CD8-positive, alpha-beta T cell (primary cell): ENCODE measurements at regions of chr3 and their contacts with region 1.

Region 1: DNA sequence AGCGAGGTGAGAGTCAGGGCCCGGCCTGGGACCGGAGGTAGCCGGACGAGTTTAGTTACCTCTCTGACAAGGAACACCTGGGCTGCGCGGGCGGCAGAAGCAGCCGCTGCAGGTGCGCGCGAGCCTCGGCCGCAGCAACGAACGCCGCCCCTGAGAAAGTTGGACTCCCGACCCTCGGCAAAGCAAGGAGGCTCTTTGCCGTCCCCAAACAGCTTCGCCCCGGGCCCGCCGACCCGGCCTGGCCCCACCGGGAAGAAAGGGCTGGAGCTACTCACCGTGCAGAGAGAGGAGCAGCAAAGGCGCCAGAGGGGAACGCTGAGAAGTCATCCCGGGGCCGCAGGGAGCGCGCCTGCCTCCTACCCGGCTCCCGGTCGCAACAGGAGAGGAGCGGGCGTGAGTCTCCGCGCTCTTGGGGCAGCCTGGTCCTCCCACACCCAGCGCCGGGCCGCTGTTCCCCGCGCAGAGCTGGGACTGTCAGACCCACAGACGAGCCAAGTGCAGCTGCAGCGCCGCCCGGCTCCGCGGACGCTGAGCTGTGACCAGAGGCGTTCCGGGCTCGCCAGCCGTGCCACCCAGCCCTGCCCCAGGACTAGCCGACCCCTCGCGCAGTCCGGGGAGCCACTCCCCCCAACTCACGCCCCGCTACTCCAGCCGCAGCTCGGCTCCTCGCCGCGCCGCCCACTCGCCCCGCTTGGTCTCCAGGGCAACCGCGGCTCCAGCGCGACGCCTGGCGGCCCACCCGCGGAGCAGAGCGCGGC is at the start of gene IGSF11:
- DNase-seq: peak; percentile 33 to 81 (median 64)
- ATAC-seq: peak; percentile 89
- H3K4me3 ChIP-seq: peak within 1 kb of the TSS; percentile 58 to 64
- H3K4me3 Mint-ChIP-seq: peak within 1 kb of the TSS; percentile 90
- H3K27ac ChIP-seq: peak within 1 kb of the TSS in 1 of 2 experiments; percentile 22
- H3K27ac Mint-ChIP-seq: no peak within 1 kb of the TSS
- H3K4me1 ChIP-seq: peaks cover 6% of the 10 kb centered on the region
- H3K4me1 Mint-ChIP-seq: peaks cover 15% of the 10 kb centered on the region
- H3K27me3 ChIP-seq: peaks cover 0 to 14% of the 10 kb centered on the region in 2 experiments
- H3K27me3 Mint-ChIP-seq: peaks cover 29% of the 10 kb centered on the region
- CTCF ChIP-seq: peak; percentile 67
- total RNA-seq, gene IGSF11: 0.57 to 0.86 TPM

Region 2: GRCh38 chr3:118907909-118908308 is 126.5 kb before region 1 on chr3:
- CTCF ChIA-PET with region 1: interaction called, 12 read pairs
- POLR2A ChIA-PET with region 1: no interaction called
- intact Hi-C with region 1: no loop called
- DNase-seq: no peak
- ATAC-seq: no peak
- H3K4me3 ChIP-seq: no peak overlapping the region
- H3K4me3 Mint-ChIP-seq: no peak overlapping the region
- H3K27ac ChIP-seq: no peak overlapping the region
- H3K27ac Mint-ChIP-seq: no peak overlapping the region
- H3K4me1 ChIP-seq: no peaks in the 10 kb centered on the region
- H3K4me1 Mint-ChIP-seq: no peaks in the 10 kb centered on the region
- H3K27me3 ChIP-seq: no peaks in the 10 kb centered on the region
- H3K27me3 Mint-ChIP-seq: no peaks in the 10 kb centered on the region
- CTCF ChIP-seq: no peak

Region 3: GRCh38 chr3:118949113-118949760 is 85.2 kb before region 1 on chr3:
- CTCF ChIA-PET with region 1: interaction called, 8 read pairs
- POLR2A ChIA-PET with region 1: interaction called, 4 read pairs
- intact Hi-C with region 1: loop called (anchors 5 kb)
- DNase-seq: peak in 2 of 9 experiments; percentile 34 to 55
- ATAC-seq: peak; percentile 77
- H3K4me3 ChIP-seq: no peak overlapping the region
- H3K4me3 Mint-ChIP-seq: peak overlapping the region; percentile 45
- H3K27ac ChIP-seq: no peak overlapping the region
- H3K27ac Mint-ChIP-seq: peak overlapping the region; percentile 85
- H3K4me1 ChIP-seq: peaks cover 31% of the 10 kb centered on the region
- H3K4me1 Mint-ChIP-seq: peaks cover 55% of the 10 kb centered on the region
- H3K27me3 ChIP-seq: no peaks in the 10 kb centered on the region
- H3K27me3 Mint-ChIP-seq: no peaks in the 10 kb centered on the region
- CTCF ChIP-seq: no peak

Region 4: GRCh38 chr3:119098619-119099222 is 64.3 kb after region 1 on chr3:
- CTCF ChIA-PET with region 1: interaction called, 32 read pairs
- POLR2A ChIA-PET with region 1: interaction called, 3 read pairs
- intact Hi-C with region 1: loop called (anchors 1 to 2 kb)
- DNase-seq: peak in 3 of 9 experiments; percentile 11 to 64 (median 57)
- ATAC-seq: no peak
- H3K4me3 ChIP-seq: no peak overlapping the region
- H3K4me3 Mint-ChIP-seq: no peak overlapping the region
- H3K27ac ChIP-seq: no peak overlapping the region
- H3K27ac Mint-ChIP-seq: no peak overlapping the region
- H3K4me1 ChIP-seq: no peaks in the 10 kb centered on the region
- H3K4me1 Mint-ChIP-seq: no peaks in the 10 kb centered on the region
- H3K27me3 ChIP-seq: no peaks in the 10 kb centered on the region
- H3K27me3 Mint-ChIP-seq: peaks cover 5% of the 10 kb centered on the region
- CTCF ChIP-seq: peak; percentile 90

Region 5: DNA sequence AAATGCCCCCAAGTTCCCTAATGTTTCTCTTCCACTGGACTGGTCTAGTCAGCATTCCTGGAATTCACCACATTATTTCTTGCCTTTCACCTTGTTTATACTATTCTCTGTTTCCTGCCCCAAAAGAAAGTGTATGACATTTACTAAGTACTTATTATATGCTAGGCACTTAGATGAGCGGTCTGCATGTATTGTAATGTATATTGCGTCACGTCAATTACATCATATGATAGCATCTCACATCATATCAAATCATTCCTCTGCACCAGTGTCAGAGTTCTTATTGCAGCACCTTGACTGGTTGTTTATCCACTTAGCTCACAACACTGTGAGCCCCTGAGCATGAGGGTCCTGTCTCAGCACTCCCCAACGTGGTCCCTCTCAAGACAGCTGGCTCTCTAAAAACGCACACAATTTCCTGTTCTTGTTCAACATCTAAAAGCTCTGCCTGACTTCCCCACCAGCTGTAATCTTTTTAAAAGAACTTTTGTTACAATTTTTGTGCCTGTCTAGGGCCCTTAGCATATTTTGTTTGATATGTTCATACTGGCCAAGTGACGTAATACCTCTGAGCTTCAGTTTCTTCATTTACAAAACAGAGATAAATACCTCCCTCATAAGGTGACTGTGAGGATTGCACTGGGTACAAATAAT is 318.5 kb after region 1 on chr3:
- CTCF ChIA-PET with region 1: interaction called, 4 read pairs
- POLR2A ChIA-PET with region 1: no interaction called
- intact Hi-C with region 1: loop called in 1 of 2 experiments (anchors 10 kb)
- DNase-seq: peak in 3 of 9 experiments; percentile 20 to 76 (median 61)
- ATAC-seq: peak; percentile 80
- H3K4me3 ChIP-seq: no peak overlapping the region
- H3K4me3 Mint-ChIP-seq: no peak overlapping the region
- H3K27ac ChIP-seq: no peak overlapping the region
- H3K27ac Mint-ChIP-seq: peak overlapping the region; percentile 8
- H3K4me1 ChIP-seq: peaks cover 20% of the 10 kb centered on the region
- H3K4me1 Mint-ChIP-seq: peaks cover 20% of the 10 kb centered on the region
- H3K27me3 ChIP-seq: no peaks in the 10 kb centered on the region
- H3K27me3 Mint-ChIP-seq: no peaks in the 10 kb centered on the region
- CTCF ChIP-seq: peak; percentile 63